CD4-positive, alpha-beta memory T cell (primary cell): ENCODE measurements at regions of chr7 and their contacts with region 1.

Region 1: DNA sequence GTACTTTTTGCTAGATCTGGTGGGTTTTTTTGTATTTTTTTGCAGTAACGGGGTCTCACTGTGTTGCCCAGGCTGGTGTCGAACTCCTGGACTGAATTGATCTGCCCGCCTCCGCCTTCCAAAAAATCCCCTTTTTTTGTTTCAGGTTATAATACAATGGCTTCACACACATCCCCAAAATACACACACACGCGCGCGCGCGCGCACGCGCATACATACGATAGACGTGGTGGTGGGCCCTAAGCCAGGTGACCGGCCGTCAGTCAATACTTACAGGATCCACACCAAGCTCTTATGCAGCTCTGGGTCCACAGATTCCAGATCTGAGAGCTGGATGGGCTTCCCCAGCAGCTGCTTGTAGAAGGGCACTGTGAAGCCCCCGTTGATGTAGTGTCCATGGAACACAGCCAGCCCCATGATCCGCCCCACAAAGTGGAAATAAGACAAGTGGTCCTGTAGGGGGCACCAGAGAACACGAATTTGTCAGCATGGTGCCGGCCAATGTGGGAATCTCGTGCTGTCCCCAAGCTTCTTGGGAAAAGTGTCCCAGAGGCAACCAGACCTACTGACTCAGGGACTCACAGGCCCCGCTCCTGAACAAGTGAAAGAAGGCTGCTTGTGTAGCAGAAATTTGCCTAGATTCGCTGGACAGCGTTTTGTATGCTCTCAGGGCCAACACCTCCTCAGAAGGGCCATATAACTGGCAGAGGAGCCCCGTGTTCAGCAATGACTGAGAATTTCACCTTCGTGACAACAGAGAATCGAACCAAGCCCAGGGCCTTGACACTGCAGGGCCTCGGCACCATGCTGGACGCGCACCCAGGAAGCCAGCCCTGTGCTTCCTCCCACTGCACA is 103.6 kb downstream of the SMURF1 start:
- DNase-seq: peak; percentile 51 to 63 (median 58)
- H3K4me3 ChIP-seq: no peak overlapping the region
- H3K4me3 Mint-ChIP-seq: peak overlapping the region in 1 of 8 donors; percentile 4
- H3K27ac ChIP-seq: no peak overlapping the region
- H3K27ac Mint-ChIP-seq: peak overlapping the region in 6 of 7 donors; percentile 4 to 77 (median 64)
- H3K4me1 ChIP-seq: no peaks in the 10 kb centered on the region
- H3K4me1 Mint-ChIP-seq: peaks cover 0 to 7% (median 5%) of the 10 kb centered on the region in 4 donors
- H3K27me3 ChIP-seq: no peaks in the 10 kb centered on the region
- H3K27me3 Mint-ChIP-seq: no peaks in the 10 kb centered on the region

Region 2: DNA sequence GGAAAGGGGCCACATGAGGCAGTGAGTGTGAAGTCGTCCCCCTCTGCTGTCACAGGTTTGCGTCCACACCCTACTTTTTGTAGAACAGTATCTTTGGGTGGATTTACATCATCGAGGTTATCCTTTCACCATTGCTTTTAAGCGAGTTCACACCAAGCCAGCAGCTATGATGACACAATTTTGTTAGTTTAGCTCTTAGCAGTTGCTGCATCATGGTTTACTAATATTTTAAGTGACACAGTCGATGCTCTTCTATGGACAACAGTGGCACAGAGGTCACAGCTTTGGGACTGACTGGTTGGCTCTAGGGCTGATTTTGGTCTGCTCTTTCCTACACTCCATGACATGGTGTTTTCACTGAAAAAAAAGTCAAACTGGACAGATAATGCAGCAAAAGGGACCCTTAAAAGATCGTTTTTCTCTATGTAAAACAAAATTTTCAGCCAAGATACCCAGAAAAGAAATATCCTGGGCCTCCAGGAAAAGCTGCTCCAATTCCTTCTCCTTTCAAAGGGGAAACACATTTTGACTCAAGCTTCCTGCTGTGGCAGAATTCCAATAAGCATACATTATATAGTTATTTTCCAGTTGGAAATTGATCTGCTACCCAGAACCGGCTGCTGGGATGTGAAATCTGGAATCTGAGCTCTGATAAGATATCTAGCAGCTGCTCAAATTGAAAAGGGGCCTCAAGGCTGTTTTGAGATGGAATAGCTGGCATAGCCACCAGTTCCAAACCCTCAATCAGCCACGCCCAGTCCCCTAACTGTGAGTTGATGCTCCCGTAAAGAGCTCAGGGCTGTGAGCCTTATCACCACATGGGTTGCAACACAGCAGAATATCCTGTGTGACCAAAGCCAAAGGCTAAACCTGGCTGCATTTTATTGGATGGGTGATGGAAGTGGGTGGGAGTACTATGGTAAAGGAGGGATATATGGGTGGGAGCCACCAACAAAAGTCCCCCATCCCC is 10.6 kb before region 1 on chr7:
- CTCF ChIA-PET with region 1: interaction called, 14 read pairs
- POLR2A ChIA-PET with region 1: no interaction called
- intact Hi-C with region 1: no loop called
- DNase-seq: no peak
- H3K4me3 ChIP-seq: no peak overlapping the region
- H3K4me3 Mint-ChIP-seq: no peak overlapping the region
- H3K27ac ChIP-seq: no peak overlapping the region
- H3K27ac Mint-ChIP-seq: peak overlapping the region in 6 of 7 donors; percentile 24 to 84 (median 52)
- H3K4me1 ChIP-seq: no peaks in the 10 kb centered on the region
- H3K4me1 Mint-ChIP-seq: peaks cover 0 to 3% (median 0%) of the 10 kb centered on the region in 4 donors
- H3K27me3 ChIP-seq: no peaks in the 10 kb centered on the region
- H3K27me3 Mint-ChIP-seq: no peaks in the 10 kb centered on the region

Region 3: GRCh38 chr7:99312316-99313203 is 272.2 kb after region 1 on chr7:
- CTCF ChIA-PET with region 1: interaction called, 99 read pairs
- POLR2A ChIA-PET with region 1: no interaction called
- intact Hi-C with region 1: no loop called
- DNase-seq: peak; percentile 59 to 68 (median 63)
- H3K4me3 ChIP-seq: no peak overlapping the region
- H3K4me3 Mint-ChIP-seq: peak overlapping the region in 5 of 8 donors; percentile 7 to 65 (median 36)
- H3K27ac ChIP-seq: no peak overlapping the region
- H3K27ac Mint-ChIP-seq: peak overlapping the region in 3 of 7 donors; percentile 18 to 81 (median 70)
- H3K4me1 ChIP-seq: peaks cover 6% of the 10 kb centered on the region
- H3K4me1 Mint-ChIP-seq: peaks cover 0 to 5% (median under 1%) of the 10 kb centered on the region in 4 donors
- H3K27me3 ChIP-seq: no peaks in the 10 kb centered on the region
- H3K27me3 Mint-ChIP-seq: peaks cover 5 to 10% of the 10 kb centered on the region in 2 donors